ENCODE measurements at regions of chr4 and their contacts with region 1.

Region 1: DNA sequence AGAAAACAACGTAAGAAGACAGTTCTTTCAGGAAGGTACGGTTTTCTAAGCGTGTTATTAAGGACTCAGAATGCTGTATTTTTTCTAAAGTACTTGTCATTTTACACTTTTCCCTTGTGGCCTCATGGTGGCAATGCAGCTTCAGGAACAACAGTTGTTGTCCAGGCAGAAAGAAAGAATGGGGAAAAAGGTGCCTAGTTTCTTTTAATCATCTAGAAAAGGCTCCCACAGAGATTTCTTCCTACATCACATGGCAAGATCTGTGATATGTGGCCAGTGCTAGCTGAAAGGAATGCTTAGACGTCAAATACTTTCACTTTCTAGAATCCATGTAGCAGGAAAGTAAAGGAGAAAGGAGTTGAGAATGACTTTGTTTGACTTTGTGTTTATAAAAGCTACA is 49.0 kb upstream of the TRAM1L1 start:
- DNase-seq: peak in 5 of 10 donors; percentile 17 to 45 (median 35)
- H3K4me3 ChIP-seq: peak overlapping the region in 28 of 59 donors; percentile 1 to 51 (median 19)
- H3K27ac ChIP-seq: peak overlapping the region in 7 of 59 donors; percentile 12 to 46 (median 27)
- H3K27me3 ChIP-seq: no peaks in the 10 kb centered on the region
- CTCF ChIP-seq: peak; percentile 65 to 91 (median 80)

Region 2: DNA sequence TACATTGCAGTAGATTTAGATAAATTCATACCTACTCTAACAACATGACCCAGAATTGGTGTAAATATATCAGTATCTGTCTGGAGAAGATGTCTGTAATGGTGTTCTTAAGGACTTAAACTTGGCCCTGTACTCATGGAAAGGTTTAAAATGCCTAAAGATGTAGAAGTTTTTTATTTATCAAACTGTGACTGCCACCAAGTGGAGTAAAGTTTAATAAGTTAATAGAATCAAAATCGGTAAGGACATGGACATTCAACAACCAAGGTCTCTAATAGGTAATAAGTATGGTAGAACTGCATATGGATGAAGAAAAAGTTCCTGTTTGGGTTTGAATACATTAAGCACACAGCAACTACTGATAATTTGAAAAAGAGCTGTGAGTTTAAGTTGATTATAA is 425.9 kb after region 1 on chr4:
- intact Hi-C with region 1: loop called (anchors 2 to 10 kb)
- DNase-seq: no peak
- H3K4me3 ChIP-seq: no peak overlapping the region
- H3K27ac ChIP-seq: no peak overlapping the region
- H3K27me3 ChIP-seq: no peaks in the 10 kb centered on the region
- CTCF ChIP-seq: peak in 46 of 56 donors; percentile 7 to 69 (median 46)

Region 3: DNA sequence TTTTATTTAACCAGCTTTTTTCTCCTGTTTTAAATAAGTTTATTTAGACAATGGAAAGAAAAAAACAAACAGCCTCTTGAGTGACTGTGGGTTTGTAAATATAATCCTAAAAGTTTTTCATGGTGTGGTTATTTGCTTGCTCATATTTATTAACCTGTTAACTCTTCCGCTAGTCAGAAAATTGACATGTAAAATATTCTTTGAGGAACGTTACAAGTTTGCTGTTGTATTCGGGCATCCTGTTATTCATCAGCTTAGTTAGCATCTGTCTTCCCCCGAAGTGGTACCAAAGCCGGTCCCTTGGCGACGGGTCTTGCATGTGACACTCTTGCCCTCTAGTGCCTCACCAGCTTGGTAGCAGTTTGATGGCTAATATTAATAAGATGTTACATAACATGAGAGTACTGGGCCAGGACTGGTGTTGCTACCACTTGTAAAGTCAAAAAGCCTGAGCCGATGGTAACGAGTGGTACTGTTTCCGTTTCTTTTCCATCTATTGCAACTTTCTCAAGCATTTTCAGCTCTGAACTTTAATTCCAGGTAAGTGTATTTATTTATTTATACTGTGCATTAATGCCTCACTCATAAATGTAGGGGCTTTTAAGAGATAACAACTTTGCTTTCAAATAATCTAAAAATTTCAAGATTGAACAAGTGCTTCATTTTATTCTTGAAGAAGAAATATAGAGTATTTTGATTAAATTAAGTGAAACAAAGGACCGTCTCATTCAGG is 899.8 kb after region 1 on chr4 and contains the start of gene NDST3:
- intact Hi-C with region 1: loop called (anchors 5 kb)
- DNase-seq: peak; percentile 43 to 86 (median 82)
- H3K4me3 ChIP-seq: peak within 1 kb of the TSS; percentile 50 to 87 (median 71)
- H3K27ac ChIP-seq: peak within 1 kb of the TSS in 56 of 59 donors; percentile 23 to 92 (median 79)
- H3K27me3 ChIP-seq: peaks cover 0 to 13% (median 0%) of the 10 kb centered on the region in 45 donors
- CTCF ChIP-seq: peak in 55 of 56 donors; percentile 36 to 79 (median 62)
- total RNA-seq, gene NDST3: 5.4 to 45.3 (median 23.4) TPM

Region 4: GRCh38 chr4:118224239-118224829 is 1089.9 kb after region 1 on chr4:
- intact Hi-C with region 1: loop called in 1 of 2 experiments (anchors 10 kb)
- DNase-seq: peak in 1 of 10 donors; percentile 4
- H3K4me3 ChIP-seq: no peak overlapping the region
- H3K27ac ChIP-seq: no peak overlapping the region
- H3K27me3 ChIP-seq: no peaks in the 10 kb centered on the region
- CTCF ChIP-seq: peak; percentile 58 to 88 (median 76)

Measured in dorsolateral prefrontal cortex (tissue), 120 donors.